ENCODE measurements at regions of chr12 and their contacts with region 1.

Region 1: DNA sequence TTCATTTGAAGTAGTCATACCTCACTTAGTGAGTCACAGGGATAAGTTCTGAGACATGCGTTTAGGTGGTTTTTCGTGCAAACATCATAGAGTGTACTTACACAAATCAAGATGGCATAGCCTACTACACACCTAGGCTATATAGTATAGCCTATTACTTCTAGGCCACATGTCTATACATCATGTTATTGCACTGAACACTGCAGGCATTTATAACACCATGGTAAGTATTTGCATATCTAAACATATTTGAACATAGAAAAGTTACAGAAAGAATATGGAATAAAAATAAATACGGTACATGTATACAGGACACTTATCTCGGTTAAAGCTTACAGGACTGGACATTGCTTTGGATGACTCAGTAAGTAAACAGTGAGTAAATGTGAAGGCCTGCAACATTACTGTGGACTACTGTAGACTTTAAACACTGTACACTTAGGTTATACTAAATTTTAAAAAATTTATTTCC is 670.6 kb downstream of the SLC16A7 start:
- DNase-seq: peak; percentile 69
- H3K4me3 ChIP-seq: no peak overlapping the region
- H3K27ac ChIP-seq: peak overlapping the region; percentile 7
- H3K4me1 ChIP-seq: peaks cover 16% of the 10 kb centered on the region
- H3K27me3 ChIP-seq: no peaks in the 10 kb centered on the region
- CTCF ChIP-seq: no peak
- POLR2A ChIP-seq: no peak

Region 2: GRCh38 chr12:60279221-60279620 is 12.8 kb after region 1 on chr12:
- CTCF ChIA-PET with region 1: interaction called, 8 read pairs
- POLR2A ChIA-PET with region 1: no interaction called
- dilution Hi-C with region 1: no loop called
- intact Hi-C with region 1: loop called (anchors 1 kb)
- DNase-seq: peak; percentile 88
- H3K4me3 ChIP-seq: peak overlapping the region in 1 of 3 experiments; percentile 15
- H3K27ac ChIP-seq: peak overlapping the region; percentile 63
- H3K4me1 ChIP-seq: peaks cover 17% of the 10 kb centered on the region
- H3K27me3 ChIP-seq: no peaks in the 10 kb centered on the region
- CTCF ChIP-seq: no peak
- POLR2A ChIP-seq: no peak

Measured in endothelial cell of umbilical vein (primary cell).